ENCODE measurements at regions of chr9 and their contacts with region 1.

Region 1: GRCh38 chr9:32550562-32551433 is 1.3 kb upstream of the SMIM27 start:
- DNase-seq: peak; percentile 94 to 96
- H3K4me3 ChIP-seq: peak overlapping the region; percentile 83 to 90
- H3K27ac ChIP-seq: peak overlapping the region; percentile 93 to 94
- H3K4me1 ChIP-seq: peaks cover 0 to 38% (median 16%) of the 10 kb centered on the region in 4 donors
- H3K27me3 ChIP-seq: no peaks in the 10 kb centered on the region
- CTCF ChIP-seq: no peak

Region 2: GRCh38 chr9:32395490-32396216 is 155.1 kb before region 1 on chr9:
- intact Hi-C with region 1: no loop called
- DNase-seq: peak; percentile 72 to 77
- H3K4me3 ChIP-seq: no peak overlapping the region
- H3K27ac ChIP-seq: peak overlapping the region in 1 of 2 donors; percentile 22
- H3K4me1 ChIP-seq: peaks cover 0 to 15% (median 8%) of the 10 kb centered on the region in 4 donors
- H3K27me3 ChIP-seq: no peaks in the 10 kb centered on the region
- CTCF ChIP-seq: no peak

Region 3: DNA sequence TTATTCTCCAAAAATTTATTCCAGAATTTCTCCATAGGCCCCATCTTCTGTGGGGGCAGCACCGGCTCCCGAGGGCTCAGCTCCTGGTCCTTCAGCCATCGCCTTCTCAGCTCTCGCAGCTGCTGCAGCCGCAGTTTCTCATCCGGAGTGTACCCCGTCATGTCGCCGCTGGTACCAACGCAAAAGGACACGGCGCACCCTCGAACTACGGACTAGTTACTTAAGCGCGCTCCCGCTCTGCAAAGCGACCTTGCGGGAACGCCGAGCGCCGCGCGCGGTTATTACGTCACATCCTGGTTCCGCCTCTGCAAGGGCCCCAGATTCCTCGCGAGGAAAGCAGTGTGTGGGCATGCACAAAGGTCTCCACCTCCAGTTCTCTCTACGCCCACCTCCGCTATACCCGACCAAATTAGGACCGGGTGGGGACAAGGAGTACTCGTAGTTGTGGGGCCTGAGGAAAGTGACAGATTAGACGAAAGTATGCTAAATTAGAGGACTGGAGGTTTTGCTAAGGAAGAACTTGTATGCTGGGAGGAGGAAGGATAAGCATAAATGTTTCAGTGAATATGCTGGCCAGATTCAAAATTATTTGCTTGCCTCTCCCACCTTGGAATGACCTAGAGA is 22.2 kb after region 1 on chr9 and contains the start of gene NDUFB6:
- intact Hi-C with region 1: loop called (anchors 1 kb)
- DNase-seq: peak; percentile 89 to 95
- H3K4me3 ChIP-seq: peak within 1 kb of the TSS; percentile 84 to 94
- H3K27ac ChIP-seq: peak within 1 kb of the TSS; percentile 89 to 92
- H3K4me1 ChIP-seq: peaks cover 0 to 26% (median 17%) of the 10 kb centered on the region in 4 donors
- H3K27me3 ChIP-seq: no peaks in the 10 kb centered on the region
- CTCF ChIP-seq: no peak

Region 4: GRCh38 chr9:32665101-32665500 is 114.3 kb after region 1 on chr9:
- intact Hi-C with region 1: no loop called
- DNase-seq: no peak
- H3K4me3 ChIP-seq: no peak overlapping the region
- H3K27ac ChIP-seq: no peak overlapping the region
- H3K4me1 ChIP-seq: no peaks in the 10 kb centered on the region
- H3K27me3 ChIP-seq: no peaks in the 10 kb centered on the region
- CTCF ChIP-seq: no peak

Measured in tibial artery (tissue), 4 donors.